Right ventricle myocardium inferior (tissue), 1 donor: ENCODE measurements at regions of chr7 and their contacts with region 1.

Region 1: GRCh38 chr7:51162724-51163329 is 153.8 kb downstream of the COBL start:
- DNase-seq: no peak
- ATAC-seq: peak; percentile 78

Region 2: GRCh38 chr7:50092579-50093491 is 1070.0 kb before region 1 on chr7 and contains the start of gene ZPBP:
- intact Hi-C with region 1: loop called (anchors 5 kb)
- DNase-seq: no peak
- ATAC-seq: peak; percentile 39
- total RNA-seq, gene ZPBP: not detected

Region 3: DNA sequence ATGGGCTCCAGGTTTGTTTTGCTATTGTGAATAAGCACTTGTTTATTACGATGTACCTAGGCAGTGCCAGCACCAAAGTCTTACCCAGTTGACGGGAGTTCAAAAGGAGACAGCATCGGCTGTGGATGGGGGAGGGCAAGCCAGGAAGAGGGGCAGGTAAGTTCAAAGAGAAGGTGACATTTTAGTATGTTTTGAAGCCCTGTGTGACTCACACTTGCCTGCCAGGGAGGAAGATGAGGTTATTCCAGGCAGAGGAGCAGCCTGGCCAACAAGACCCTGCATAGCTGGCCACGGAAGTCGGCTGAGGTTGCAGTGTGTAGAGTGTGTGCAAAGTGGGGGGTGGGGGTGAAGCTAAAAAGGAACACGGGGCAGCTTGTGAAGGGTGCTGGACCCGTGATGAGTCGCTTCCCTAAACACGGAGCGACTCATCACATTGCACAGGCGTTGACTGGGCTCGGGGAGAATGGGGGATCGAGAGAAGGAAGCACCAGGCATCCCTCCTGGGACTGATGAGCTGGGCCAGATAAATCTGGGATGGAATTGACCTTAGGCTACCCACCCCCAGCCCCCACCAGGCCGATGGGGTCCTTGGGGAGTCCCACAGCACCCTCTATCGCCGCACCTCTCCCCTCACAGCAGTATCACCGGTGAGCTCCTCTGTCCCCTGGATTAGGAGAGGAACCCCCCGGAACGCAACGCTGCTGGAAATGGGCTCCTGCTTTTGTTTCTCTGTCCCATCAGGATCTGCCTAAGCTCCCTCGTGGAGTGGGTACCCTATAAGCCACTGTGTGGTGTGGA is 956.2 kb before region 1 on chr7:
- intact Hi-C with region 1: loop called (anchors 5 kb)
- DNase-seq: no peak
- ATAC-seq: no peak

Region 4: GRCh38 chr7:50467817-50468610 is 694.8 kb before region 1 on chr7:
- intact Hi-C with region 1: loop called (anchors 1 kb)
- DNase-seq: peak; percentile 80
- ATAC-seq: peak; percentile 86

Region 5: DNA sequence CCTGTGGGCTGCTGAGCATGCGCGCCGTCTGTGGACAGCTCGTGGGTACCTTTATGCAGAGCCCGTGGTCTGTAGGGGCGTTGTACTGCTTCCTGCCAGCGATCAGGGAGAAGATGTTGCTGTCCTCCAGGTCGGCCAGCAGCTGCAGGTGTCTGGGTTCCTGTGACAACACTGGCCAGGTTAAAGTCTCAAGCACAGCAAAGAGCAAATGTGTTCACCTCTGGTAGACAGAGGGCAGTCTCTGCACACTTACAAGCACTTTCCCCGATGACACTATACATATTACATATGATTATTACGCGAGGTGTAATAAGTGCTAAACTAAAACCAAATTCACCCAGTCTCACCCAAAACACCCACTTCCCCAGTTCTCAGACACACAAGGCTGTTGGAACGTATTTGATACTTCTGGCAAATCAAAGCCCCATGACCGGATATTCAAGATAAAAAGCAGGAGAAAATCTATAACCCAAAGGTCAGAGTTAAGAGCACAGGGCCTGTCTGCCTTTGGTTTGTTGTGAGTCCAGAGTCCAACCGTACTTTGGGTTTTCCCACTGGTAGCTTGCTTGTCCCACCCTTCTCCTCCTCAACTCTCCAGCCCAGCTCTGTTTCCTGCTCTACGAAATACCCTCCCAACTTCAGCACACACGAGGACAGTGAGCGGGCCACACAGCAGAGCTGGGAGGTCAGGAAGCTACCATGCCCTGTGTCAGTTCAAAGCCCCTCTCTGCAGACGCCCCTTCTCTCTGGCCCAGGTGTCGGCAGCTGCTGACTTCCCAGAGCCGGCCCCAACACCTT is 547.9 kb before region 1 on chr7:
- intact Hi-C with region 1: loop called (anchors 5 kb)
- DNase-seq: no peak
- ATAC-seq: peak; percentile 47

Region 6: GRCh38 chr7:50679218-50680007 is 483.4 kb before region 1 on chr7:
- intact Hi-C with region 1: loop called (anchors 5 kb)
- DNase-seq: no peak
- ATAC-seq: peak; percentile 75

Region 7: GRCh38 chr7:51366930-51367613 is 204.2 kb after region 1 on chr7:
- intact Hi-C with region 1: loop called (anchors 1 kb)
- DNase-seq: no peak
- ATAC-seq: peak; percentile 87